SK-N-SH (cell line): ENCODE measurements at regions of chr16 and their contacts with region 1.

Region 1: GRCh38 chr16:4392382-4393239 is 21.0 kb downstream of the VASN start:
- DNase-seq: peak; percentile 94
- H3K4me3 ChIP-seq: no peak overlapping the region
- H3K27ac ChIP-seq: peak overlapping the region; percentile 72 to 97
- H3K4me1 ChIP-seq: peaks cover 21 to 57% of the 10 kb centered on the region in 2 experiments; a peak in 3 of 4 replicates
- H3K27me3 ChIP-seq: no peaks in the 10 kb centered on the region
- CTCF ChIP-seq: no peak
- EP300 ChIP-seq: peak; percentile 83 to 91
- RAD21 ChIP-seq: no peak

Region 2: GRCh38 chr16:3934491-3935181 is 458.0 kb before region 1 on chr16:
- CTCF ChIA-PET with region 1: no interaction called
- POLR2A ChIA-PET with region 1: no interaction called
- DNase-seq: no peak
- H3K4me3 ChIP-seq: no peak overlapping the region
- H3K27ac ChIP-seq: no peak overlapping the region
- H3K4me1 ChIP-seq: peaks cover 0 to 2% of the 10 kb centered on the region in 2 experiments; a peak in 1 of 4 replicates
- H3K27me3 ChIP-seq: no peaks in the 10 kb centered on the region
- CTCF ChIP-seq: no peak
- EP300 ChIP-seq: no peak
- RAD21 ChIP-seq: no peak

Region 3: GRCh38 chr16:4371357-4372000 is 21.1 kb before region 1 on chr16 and contains the start of gene VASN:
- CTCF ChIA-PET with region 1: interaction called, 12 read pairs
- POLR2A ChIA-PET with region 1: interaction called, 28 read pairs
- DNase-seq: peak; percentile 98
- H3K4me3 ChIP-seq: peak within 1 kb of the TSS; percentile 77 to 92
- H3K27ac ChIP-seq: peak within 1 kb of the TSS; percentile 83 to 88
- H3K4me1 ChIP-seq: peaks cover 40 to 80% of the 10 kb centered on the region in 2 experiments
- H3K27me3 ChIP-seq: no peaks in the 10 kb centered on the region
- CTCF ChIP-seq: no peak
- EP300 ChIP-seq: peak in 1 of 2 experiments; percentile 51; a peak in 2 of 4 replicates
- RAD21 ChIP-seq: no peak
- polyA plus RNA-seq, gene VASN: 11.4 and 37.4 TPM in 2 replicates

Region 4: GRCh38 chr16:4377573-4378143 is 15.0 kb before region 1 on chr16:
- CTCF ChIA-PET with region 1: interaction called, 15 read pairs
- POLR2A ChIA-PET with region 1: interaction called, 28 read pairs
- DNase-seq: no peak
- H3K4me3 ChIP-seq: no peak overlapping the region
- H3K27ac ChIP-seq: no peak overlapping the region; a peak in 1 of 4 replicates
- H3K4me1 ChIP-seq: peaks cover 32 to 68% of the 10 kb centered on the region in 2 experiments
- H3K27me3 ChIP-seq: no peaks in the 10 kb centered on the region
- CTCF ChIP-seq: no peak
- EP300 ChIP-seq: no peak
- RAD21 ChIP-seq: no peak

Region 5: DNA sequence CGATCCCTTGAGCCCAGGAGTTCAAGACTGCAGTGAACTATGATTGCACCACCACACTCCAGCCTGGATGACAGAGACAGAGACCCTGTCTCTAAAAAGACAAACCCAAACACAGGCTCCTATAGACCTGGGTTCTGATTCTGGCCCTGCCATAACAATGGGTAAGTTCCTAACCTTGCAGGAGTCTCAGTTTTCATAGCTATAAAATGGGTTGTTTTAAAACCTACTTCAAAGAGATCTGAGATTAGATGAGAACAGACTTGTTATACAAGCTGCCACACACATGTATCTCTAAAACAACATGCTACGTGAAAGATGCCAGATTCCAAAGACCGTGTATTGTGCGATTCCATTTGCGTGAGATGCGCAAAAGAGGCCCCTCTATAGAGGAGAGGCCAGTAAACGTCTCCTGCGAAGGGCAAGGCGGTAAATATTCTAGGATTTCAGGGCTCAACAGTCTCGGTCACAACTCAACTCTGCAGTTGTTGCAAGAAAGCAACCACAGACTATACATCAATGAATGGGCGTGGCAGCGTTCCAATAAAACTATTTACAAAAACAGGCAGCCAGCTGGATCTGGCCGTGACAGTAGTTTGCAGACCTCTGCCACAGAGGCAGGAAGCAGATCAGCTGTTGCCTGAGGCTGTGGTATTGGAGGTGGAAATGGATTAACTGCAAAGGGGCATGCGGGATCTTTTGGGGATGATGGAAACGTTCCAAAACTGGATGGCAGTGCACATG is 17.9 kb after region 1 on chr16:
- CTCF ChIA-PET with region 1: interaction called, 558 read pairs
- POLR2A ChIA-PET with region 1: interaction called, 10 read pairs
- DNase-seq: peak; percentile 76
- H3K4me3 ChIP-seq: no peak overlapping the region
- H3K27ac ChIP-seq: no peak overlapping the region; a peak in 1 of 4 replicates
- H3K4me1 ChIP-seq: peaks cover 6 to 24% of the 10 kb centered on the region in 2 experiments; a peak in 1 of 4 replicates
- H3K27me3 ChIP-seq: no peaks in the 10 kb centered on the region
- CTCF ChIP-seq: no peak
- EP300 ChIP-seq: peak in 1 of 2 experiments; percentile 70; a peak in 1 of 4 replicates
- RAD21 ChIP-seq: no peak

Region 6: DNA sequence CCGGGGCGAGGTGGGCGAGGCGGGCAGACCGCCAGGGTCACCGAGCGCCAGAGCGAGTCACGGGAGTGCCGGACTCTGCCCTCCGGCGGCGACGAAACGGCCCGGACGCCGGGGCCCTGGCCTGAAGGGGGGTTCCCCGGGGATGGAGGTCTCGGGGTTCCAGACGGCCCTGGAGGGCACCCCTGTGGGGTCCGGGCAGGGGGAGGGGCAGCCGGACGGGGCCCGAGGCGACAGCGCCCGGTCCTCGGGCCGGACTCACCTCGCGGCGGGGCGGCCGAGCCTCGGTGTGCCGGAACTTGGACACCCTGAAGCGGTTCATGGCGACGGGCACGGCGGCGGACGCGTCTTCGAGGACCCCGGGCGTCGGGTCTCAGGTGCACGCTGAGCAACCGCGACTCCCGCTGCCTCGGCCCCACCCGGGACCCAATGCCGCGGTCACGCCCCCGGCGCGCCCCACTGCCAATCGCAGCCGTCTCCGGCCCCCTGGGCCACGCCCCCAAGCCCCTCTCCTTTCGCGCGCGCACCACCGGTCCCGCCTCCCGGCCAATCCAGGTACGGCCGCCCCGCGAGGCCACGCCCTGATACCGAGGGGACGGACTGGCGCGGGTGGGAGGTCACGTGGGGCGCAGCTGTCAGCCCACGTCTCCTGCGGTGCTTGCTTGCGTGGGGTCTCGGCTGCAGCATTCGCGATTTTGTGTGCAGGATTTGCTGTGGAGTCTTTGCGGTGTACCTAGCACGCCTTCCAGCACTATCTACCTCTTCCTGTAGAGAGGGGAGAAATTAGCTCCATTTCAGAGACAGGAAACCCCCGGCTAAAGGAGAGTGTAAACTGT is 23.8 kb after region 1 on chr16 and contains the start of gene CORO7:
- CTCF ChIA-PET with region 1: interaction called, 28 read pairs
- POLR2A ChIA-PET with region 1: interaction called, 10 read pairs
- DNase-seq: peak; percentile 99
- H3K4me3 ChIP-seq: peak within 1 kb of the TSS; percentile 78 to 87
- H3K27ac ChIP-seq: peak within 1 kb of the TSS; percentile 20 to 58; a peak in 2 of 4 replicates
- H3K4me1 ChIP-seq: peaks cover 6 to 20% of the 10 kb centered on the region in 2 experiments; a peak in 1 of 4 replicates
- H3K27me3 ChIP-seq: no peaks in the 10 kb centered on the region
- CTCF ChIP-seq: no peak
- EP300 ChIP-seq: no peak
- RAD21 ChIP-seq: no peak
- polyA plus RNA-seq, gene CORO7: 21.9 and 25.8 TPM in 2 replicates